ENCODE measurements at regions of chr1 and their contacts with region 1.

Region 1: DNA sequence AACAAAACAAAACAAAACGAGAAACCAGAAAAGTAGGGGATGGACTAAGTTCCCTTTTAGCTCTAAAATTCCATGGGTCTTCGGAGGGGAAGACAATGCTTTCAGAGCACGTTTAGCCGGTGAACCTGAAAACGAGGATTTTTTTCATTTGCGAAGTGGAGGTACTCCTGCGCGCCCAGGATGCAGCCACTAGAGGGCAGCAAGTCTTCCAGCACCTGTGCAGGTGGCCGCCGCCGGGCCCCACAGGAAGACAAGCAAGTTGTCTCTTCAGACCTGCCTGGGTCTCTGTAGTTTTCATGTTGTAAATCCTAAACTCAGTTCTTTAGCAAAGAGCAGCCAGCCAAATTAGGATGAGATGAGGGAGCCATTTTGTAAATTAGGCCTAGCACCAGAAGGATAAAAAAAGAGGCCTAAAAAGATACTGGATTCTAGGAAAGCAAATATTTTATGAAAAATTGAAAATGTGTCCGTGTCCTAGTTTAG is 17.7 kb upstream of the SNX27 start:
- DNase-seq: peak; percentile 89
- ATAC-seq: peak; percentile 89
- H3K4me3 ChIP-seq: peak overlapping the region; percentile 27; the same call in 1 of the 2 replicates
- H3K27ac ChIP-seq: no peak overlapping the region
- H3K4me1 ChIP-seq: peaks cover 26% of the 10 kb centered on the region
- H3K27me3 ChIP-seq: no peaks in the 10 kb centered on the region
- CTCF ChIP-seq: peak; percentile 99

Region 2: GRCh38 chr1:151611832-151612500 is 17.8 kb after region 1 on chr1 and contains the start of gene SNX27:
- CTCF ChIA-PET with region 1: no interaction called
- POLR2A ChIA-PET with region 1: no interaction called
- intact Hi-C with region 1: loop called (anchors 2 kb)
- DNase-seq: peak; percentile 93
- ATAC-seq: peak; percentile 82
- H3K4me3 ChIP-seq: peak within 1 kb of the TSS; percentile 87
- H3K27ac ChIP-seq: peak within 1 kb of the TSS; percentile 25; the same call in 1 of the 2 replicates
- H3K4me1 ChIP-seq: peaks cover 55% of the 10 kb centered on the region
- H3K27me3 ChIP-seq: no peaks in the 10 kb centered on the region
- CTCF ChIP-seq: no peak
- total RNA-seq, gene SNX27: 25.1 and 34.8 TPM in 2 replicates

Region 3: GRCh38 chr1:151693076-151693651 is 99.0 kb after region 1 on chr1:
- CTCF ChIA-PET with region 1: interaction called, 3 read pairs
- POLR2A ChIA-PET with region 1: no interaction called
- intact Hi-C with region 1: loop called (anchors 5 kb)
- DNase-seq: peak; percentile 72
- ATAC-seq: peak; percentile 79
- H3K4me3 ChIP-seq: no peak overlapping the region
- H3K27ac ChIP-seq: no peak overlapping the region
- H3K4me1 ChIP-seq: no peaks in the 10 kb centered on the region
- H3K27me3 ChIP-seq: no peaks in the 10 kb centered on the region
- CTCF ChIP-seq: peak; percentile 97

Measured in PC-3 (cell line).